ENCODE measurements at regions of chr2 and their contacts with region 1.

Region 1: GRCh38 chr2:20015472-20016083 is 3.1 kb upstream of the MATN3 start:
- H3K4me3 ChIP-seq: no peak overlapping the region
- H3K27ac ChIP-seq: no peak overlapping the region
- H3K4me1 ChIP-seq: no peaks in the 10 kb centered on the region
- CTCF ChIP-seq: peak; percentile 33; the same call in 1 of the 2 replicates

Region 2: DNA sequence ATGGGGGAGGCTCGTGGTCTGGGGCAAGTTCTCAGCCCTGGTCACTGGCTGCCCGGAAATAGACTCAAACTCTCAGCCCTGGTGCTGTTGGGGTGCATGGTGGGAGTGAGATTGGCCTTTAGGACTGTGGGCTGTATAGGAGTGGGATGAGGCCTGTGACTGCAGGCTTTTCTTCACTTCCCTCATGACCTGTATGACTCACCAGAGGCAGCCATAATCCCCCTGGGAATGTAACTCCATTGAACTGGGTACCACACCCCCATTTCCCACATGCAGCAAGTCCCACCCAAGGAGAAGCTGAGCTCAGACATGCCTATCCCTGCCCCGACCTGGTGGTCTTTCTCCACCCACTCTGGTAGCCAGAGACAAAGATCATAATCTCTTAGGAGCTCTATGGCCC is 479.4 kb before region 1 on chr2:
- CTCF ChIA-PET with region 1: no interaction called
- POLR2A ChIA-PET with region 1: no interaction called
- H3K4me3 ChIP-seq: no peak overlapping the region
- H3K27ac ChIP-seq: no peak overlapping the region
- H3K4me1 ChIP-seq: no peaks in the 10 kb centered on the region; the same call in 1 of the 2 replicates
- CTCF ChIP-seq: no peak

Region 3: GRCh38 chr2:19963386-19963785 is 52.2 kb before region 1 on chr2:
- CTCF ChIA-PET with region 1: interaction called, 10 read pairs
- POLR2A ChIA-PET with region 1: no interaction called
- H3K4me3 ChIP-seq: no peak overlapping the region
- H3K27ac ChIP-seq: no peak overlapping the region
- H3K4me1 ChIP-seq: no peaks in the 10 kb centered on the region
- CTCF ChIP-seq: no peak

Region 4: DNA sequence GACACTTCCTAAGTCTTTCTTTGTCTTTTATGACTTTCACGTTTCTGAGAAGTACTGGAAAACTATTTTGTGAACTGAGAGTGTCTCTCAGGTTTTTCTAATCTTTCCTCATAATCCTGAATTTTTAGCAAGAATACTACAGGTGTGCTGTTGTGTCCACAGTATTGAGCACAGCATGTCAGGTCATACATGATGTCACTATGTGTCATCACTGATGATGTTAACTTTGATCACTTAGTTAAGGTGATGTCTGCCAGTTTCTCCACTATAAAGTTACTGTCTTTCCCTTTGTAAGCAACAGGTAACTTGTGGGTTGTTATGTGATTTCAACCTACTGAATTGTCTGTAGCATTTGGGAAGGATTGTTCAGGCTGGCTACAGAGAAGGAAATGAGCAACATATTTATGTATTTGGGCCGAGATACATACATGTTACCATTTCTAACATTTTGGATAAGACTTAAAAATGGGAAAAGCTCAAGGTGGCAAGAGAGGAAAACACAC is 14.2 kb before region 1 on chr2:
- CTCF ChIA-PET with region 1: interaction called, 15 read pairs
- POLR2A ChIA-PET with region 1: no interaction called
- H3K4me3 ChIP-seq: no peak overlapping the region
- H3K27ac ChIP-seq: no peak overlapping the region
- H3K4me1 ChIP-seq: no peaks in the 10 kb centered on the region
- CTCF ChIP-seq: no peak

Region 5: DNA sequence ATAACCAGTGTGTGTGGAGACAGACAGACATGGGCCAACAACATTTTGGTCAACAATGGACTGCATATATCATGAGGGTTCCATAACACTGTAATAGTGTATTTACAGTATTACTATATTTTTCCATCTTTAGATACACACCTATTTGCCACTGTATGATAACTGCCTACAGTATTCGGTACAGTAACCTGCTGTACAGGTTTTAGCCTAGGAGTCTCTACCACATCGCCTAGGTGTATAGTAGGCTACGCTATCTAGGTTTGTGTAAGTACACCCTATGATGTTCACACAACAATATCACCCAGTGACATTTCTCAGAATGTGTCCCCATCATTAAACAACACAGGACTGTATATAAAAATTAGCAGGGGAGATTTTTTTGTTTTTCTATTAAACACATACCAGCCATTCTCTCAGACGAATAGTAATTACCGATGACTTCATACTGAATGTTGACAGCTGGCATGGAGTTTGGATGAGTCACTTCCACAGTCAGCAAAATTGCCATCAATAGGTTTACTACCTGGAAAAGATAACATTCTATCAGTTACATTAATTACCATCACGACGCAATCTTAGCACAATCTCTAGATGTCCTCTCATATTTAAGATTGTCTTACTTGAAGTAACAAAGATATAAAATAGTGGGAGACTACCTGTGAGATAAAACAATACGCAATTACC is 25.1 kb after region 1 on chr2:
- CTCF ChIA-PET with region 1: interaction called, 31 read pairs
- POLR2A ChIA-PET with region 1: interaction called, 5 read pairs
- H3K4me3 ChIP-seq: no peak overlapping the region
- H3K27ac ChIP-seq: no peak overlapping the region
- H3K4me1 ChIP-seq: peaks cover 11% of the 10 kb centered on the region
- CTCF ChIP-seq: no peak

Region 6: GRCh38 chr2:20097879-20098714 is 82.5 kb after region 1 on chr2:
- CTCF ChIA-PET with region 1: interaction called, 128 read pairs
- POLR2A ChIA-PET with region 1: no interaction called
- H3K4me3 ChIP-seq: no peak overlapping the region
- H3K27ac ChIP-seq: no peak overlapping the region
- H3K4me1 ChIP-seq: 0 out of 2 replicates have a peak, but pooled peaks cover 2% of the 10 kb centered on the region
- CTCF ChIP-seq: peak; percentile 85